ENCODE measurements at regions of chr3 and their contacts with region 1.

Region 1: DNA sequence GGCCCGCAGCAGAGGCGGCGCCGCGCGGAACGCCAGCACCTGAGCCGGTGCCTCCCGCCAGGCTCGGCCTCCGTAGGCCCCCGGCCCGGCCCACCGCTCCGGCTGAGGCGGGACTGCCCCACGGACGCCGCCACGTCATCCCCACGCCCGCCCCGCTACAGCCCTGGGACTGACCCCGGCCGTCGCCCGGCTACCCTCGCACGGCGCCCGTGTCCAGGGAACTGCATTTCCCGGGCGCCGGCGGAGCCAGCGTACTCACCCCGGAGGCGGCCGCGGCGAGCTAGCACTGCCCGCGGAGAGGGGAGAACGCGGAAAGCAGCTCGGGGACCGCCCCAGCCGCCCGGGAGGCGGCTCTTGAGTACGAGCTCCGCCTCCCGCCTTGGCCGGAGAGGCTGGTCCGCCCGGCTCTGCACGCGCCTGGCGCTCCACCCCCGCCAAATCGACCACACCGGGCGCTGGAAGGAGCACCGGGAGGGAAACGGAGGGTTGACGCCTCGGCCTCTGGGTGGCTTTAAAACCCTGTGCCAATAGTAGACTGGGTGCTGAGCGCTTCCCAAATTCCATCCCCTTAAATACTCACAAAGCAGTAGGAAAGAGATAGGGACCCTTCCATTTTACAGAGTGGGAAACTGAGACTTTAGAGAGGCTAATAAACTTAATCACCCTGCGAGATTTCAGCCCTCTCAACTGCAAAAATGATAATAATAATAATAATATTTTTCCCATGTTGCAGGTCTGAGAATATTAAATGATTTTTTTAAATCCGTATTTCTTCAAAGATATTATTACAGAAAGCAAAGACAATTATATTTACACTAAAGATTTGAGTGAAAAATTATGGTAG is at the start of gene B4GALT4:
- DNase-seq: peak; percentile 94
- H3K4me3 ChIP-seq: peak within 1 kb of the TSS; percentile 59 to 85 (median 72)
- H3K27ac ChIP-seq: peak within 1 kb of the TSS; percentile 85 to 92 (median 90)
- H3K4me1 ChIP-seq: peaks cover 0 to 28% (median 17%) of the 10 kb centered on the region in 4 donors
- H3K27me3 ChIP-seq: no peaks in the 10 kb centered on the region
- CTCF ChIP-seq: no peak
- EP300 ChIP-seq: no peak
- POLR2A ChIP-seq: peak; percentile 66 to 71
- total RNA-seq, gene B4GALT4: 12.1 to 15.8 (median 14.0) TPM

Region 2: GRCh38 chr3:118884748-118885206 is 356.0 kb before region 1 on chr3:
- intact Hi-C with region 1: loop called (anchors 10 kb)
- DNase-seq: no peak
- H3K4me3 ChIP-seq: no peak overlapping the region
- H3K27ac ChIP-seq: no peak overlapping the region
- H3K4me1 ChIP-seq: no peaks in the 10 kb centered on the region
- H3K27me3 ChIP-seq: no peaks in the 10 kb centered on the region
- CTCF ChIP-seq: peak; percentile 69 to 87 (median 84)
- EP300 ChIP-seq: no peak
- POLR2A ChIP-seq: no peak

Region 3: DNA sequence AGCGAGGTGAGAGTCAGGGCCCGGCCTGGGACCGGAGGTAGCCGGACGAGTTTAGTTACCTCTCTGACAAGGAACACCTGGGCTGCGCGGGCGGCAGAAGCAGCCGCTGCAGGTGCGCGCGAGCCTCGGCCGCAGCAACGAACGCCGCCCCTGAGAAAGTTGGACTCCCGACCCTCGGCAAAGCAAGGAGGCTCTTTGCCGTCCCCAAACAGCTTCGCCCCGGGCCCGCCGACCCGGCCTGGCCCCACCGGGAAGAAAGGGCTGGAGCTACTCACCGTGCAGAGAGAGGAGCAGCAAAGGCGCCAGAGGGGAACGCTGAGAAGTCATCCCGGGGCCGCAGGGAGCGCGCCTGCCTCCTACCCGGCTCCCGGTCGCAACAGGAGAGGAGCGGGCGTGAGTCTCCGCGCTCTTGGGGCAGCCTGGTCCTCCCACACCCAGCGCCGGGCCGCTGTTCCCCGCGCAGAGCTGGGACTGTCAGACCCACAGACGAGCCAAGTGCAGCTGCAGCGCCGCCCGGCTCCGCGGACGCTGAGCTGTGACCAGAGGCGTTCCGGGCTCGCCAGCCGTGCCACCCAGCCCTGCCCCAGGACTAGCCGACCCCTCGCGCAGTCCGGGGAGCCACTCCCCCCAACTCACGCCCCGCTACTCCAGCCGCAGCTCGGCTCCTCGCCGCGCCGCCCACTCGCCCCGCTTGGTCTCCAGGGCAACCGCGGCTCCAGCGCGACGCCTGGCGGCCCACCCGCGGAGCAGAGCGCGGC is 206.4 kb before region 1 on chr3 and contains the start of gene IGSF11:
- intact Hi-C with region 1: loop called (anchors 10 kb)
- DNase-seq: peak; percentile 77
- H3K4me3 ChIP-seq: peak within 1 kb of the TSS; percentile 58 to 74 (median 66)
- H3K27ac ChIP-seq: peak within 1 kb of the TSS; percentile 69 to 79 (median 71)
- H3K4me1 ChIP-seq: peaks cover 0 to 6% (median 3%) of the 10 kb centered on the region in 4 donors
- H3K27me3 ChIP-seq: peaks cover 0 to 15% (median 8%) of the 10 kb centered on the region in 3 donors
- CTCF ChIP-seq: peak in 2 of 4 experiments; percentile 7 to 67
- EP300 ChIP-seq: no peak
- POLR2A ChIP-seq: peak in 1 of 2 donors; percentile 31
- total RNA-seq, gene IGSF11: 8.1 to 18.2 (median 10.3) TPM

Region 4: DNA sequence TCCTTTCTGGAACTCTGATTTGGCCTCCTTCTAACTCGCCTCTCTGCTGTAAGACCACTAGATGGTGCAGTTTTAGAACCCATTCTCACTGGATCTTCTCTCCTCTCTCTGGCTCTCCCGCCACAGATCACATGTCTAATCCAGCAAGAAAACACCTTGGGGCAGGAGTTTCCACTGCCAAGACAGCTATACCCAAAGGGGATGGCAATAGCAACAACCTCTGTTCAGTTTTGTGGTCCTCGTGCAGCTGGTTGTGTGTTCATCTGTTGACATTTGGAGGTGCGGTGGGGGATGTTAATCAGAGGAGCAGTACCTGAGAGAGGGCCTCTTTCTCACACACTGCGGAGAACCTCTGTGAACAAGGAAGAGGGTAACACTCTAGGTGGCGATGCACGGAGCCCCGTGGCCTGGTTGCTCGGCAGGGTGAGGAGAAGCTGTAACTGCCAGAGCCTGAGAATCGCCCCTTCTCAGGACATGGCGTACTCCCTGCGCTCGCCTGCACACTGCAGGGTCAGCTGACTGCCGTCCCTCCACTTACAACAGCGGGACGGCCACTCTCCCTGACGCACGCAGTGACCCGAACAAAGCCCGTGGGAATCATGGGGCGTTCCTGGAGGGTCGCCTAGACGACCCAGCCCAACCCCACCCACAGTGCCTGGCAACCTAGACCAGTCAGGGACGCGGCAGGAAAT is 95.2 kb before region 1 on chr3 and contains the start of gene TEX55:
- intact Hi-C with region 1: loop called (anchors 5 kb)
- DNase-seq: no peak
- H3K4me3 ChIP-seq: no peak within 1 kb of the TSS
- H3K27ac ChIP-seq: no peak within 1 kb of the TSS
- H3K4me1 ChIP-seq: no peaks in the 10 kb centered on the region
- H3K27me3 ChIP-seq: no peaks in the 10 kb centered on the region
- CTCF ChIP-seq: peak in 2 of 4 experiments; percentile 33 to 36
- EP300 ChIP-seq: no peak
- POLR2A ChIP-seq: no peak
- total RNA-seq, gene TEX55: not detected

Region 5: DNA sequence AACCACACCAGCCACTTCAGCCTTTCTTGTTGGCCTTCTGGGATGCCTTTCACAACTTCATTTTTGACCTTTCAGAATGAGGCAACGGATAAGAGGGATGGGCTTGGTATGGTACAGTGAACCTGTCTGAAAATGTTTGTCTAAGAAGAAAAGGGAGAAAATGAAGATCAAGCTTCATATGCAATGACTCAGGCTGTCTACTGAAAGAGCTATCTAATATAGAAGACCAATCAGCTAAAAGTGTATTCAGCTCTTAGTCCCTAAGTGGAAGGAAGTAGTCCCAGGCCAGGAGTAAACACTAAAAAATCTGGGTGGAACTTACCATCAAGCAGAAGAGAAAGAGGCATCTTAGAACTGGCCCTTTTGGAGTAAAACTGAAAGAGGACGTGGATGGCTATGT is 79.6 kb before region 1 on chr3:
- intact Hi-C with region 1: no loop called
- DNase-seq: no peak
- H3K4me3 ChIP-seq: no peak overlapping the region
- H3K27ac ChIP-seq: no peak overlapping the region
- H3K4me1 ChIP-seq: no peaks in the 10 kb centered on the region
- H3K27me3 ChIP-seq: no peaks in the 10 kb centered on the region
- CTCF ChIP-seq: no peak
- EP300 ChIP-seq: no peak
- POLR2A ChIP-seq: no peak

Region 6: GRCh38 chr3:119322835-119323722 is 82.3 kb after region 1 on chr3:
- intact Hi-C with region 1: loop called (anchors 2 kb)
- DNase-seq: peak; percentile 91
- H3K4me3 ChIP-seq: peak overlapping the region; percentile 56 to 89 (median 78)
- H3K27ac ChIP-seq: peak overlapping the region; percentile 94 to 96 (median 96)
- H3K4me1 ChIP-seq: peaks cover 0 to 24% (median 6%) of the 10 kb centered on the region in 4 donors
- H3K27me3 ChIP-seq: no peaks in the 10 kb centered on the region
- CTCF ChIP-seq: no peak
- EP300 ChIP-seq: peak in 2 of 4 donors; percentile 23 to 57
- POLR2A ChIP-seq: peak; percentile 43 to 60

Measured in sigmoid colon (tissue), 7 donors.